K562 (cell line): ENCODE measurements at regions of chr7 and their contacts with region 1.

Region 1: DNA sequence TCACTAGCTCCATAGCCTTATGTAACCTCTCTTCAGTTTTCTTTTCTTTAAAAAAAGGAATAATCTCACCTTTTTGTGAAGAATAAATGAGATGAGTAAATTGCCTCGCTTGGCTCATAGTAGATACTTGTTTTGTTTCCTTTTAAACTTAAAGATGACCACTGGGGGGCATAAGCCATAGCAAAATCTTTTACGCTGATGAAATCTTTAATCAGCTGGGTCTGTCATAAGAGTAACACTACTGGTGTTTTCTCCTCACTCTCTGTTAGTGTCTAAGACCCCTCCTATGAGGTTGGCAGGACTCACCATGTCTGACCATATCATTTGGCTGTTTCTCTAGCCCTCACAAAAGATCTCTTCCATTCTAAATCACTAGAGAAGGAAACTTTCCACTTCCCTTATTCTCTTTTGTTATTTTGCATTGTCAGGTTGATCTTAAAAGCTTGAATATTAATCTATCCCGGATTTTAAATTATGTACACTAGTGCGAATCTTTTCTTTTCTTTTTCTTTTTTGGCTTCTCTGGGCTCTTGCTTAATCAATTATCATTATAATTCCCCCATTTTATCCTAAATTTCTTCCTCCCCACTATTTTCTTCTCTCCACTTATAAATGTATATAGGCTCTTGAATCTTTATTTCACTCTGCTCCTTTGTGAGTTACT is 12.5 kb downstream of the STAG3 start:
- DNase-seq: peak; percentile 48 to 76 (median 52)
- ATAC-seq: peak; percentile 90
- H3K4me3 ChIP-seq: no peak overlapping the region
- H3K27ac ChIP-seq: no peak overlapping the region
- H3K4me1 ChIP-seq: peaks cover 0 to 11% of the 10 kb centered on the region in 2 experiments; a peak in 3 of 5 replicates
- H3K27me3 ChIP-seq: no peaks in the 10 kb centered on the region
- CTCF ChIP-seq: peak; percentile 65 to 80 (median 73); a peak in 5 of 6 replicates
- EP300 ChIP-seq: peak; percentile 57; the same call in 1 of the 2 replicates
- POLR2A ChIP-seq: no peak
- RAD21 ChIP-seq: peak; percentile 78 to 83

Region 2: GRCh38 chr7:100148559-100149350 is 41.4 kb before region 1 on chr7 and contains the start of gene LAMTOR4:
- CTCF ChIA-PET with region 1: no interaction called
- POLR2A ChIA-PET with region 1: no interaction called
- in situ Hi-C with region 1: no loop called
- intact Hi-C with region 1: loop called (anchors 1 kb)
- DNase-seq: peak; percentile 99 to 100 (median 100)
- ATAC-seq: peak; percentile 99
- H3K4me3 ChIP-seq: peak within 1 kb of the TSS; percentile 87
- H3K27ac ChIP-seq: peak within 1 kb of the TSS; percentile 68
- H3K4me1 ChIP-seq: peaks cover 14 to 38% of the 10 kb centered on the region in 2 experiments; a peak in 4 of 5 replicates
- H3K27me3 ChIP-seq: no peaks in the 10 kb centered on the region
- CTCF ChIP-seq: peak in 1 of 3 experiments; percentile 6; a peak in 1 of 6 replicates
- EP300 ChIP-seq: no peak; the same call in 1 of the 2 replicates
- POLR2A ChIP-seq: peak; percentile 92
- RAD21 ChIP-seq: no peak
- polyA plus RNA-seq, gene LAMTOR4: 206 to 314 TPM

Region 3: DNA sequence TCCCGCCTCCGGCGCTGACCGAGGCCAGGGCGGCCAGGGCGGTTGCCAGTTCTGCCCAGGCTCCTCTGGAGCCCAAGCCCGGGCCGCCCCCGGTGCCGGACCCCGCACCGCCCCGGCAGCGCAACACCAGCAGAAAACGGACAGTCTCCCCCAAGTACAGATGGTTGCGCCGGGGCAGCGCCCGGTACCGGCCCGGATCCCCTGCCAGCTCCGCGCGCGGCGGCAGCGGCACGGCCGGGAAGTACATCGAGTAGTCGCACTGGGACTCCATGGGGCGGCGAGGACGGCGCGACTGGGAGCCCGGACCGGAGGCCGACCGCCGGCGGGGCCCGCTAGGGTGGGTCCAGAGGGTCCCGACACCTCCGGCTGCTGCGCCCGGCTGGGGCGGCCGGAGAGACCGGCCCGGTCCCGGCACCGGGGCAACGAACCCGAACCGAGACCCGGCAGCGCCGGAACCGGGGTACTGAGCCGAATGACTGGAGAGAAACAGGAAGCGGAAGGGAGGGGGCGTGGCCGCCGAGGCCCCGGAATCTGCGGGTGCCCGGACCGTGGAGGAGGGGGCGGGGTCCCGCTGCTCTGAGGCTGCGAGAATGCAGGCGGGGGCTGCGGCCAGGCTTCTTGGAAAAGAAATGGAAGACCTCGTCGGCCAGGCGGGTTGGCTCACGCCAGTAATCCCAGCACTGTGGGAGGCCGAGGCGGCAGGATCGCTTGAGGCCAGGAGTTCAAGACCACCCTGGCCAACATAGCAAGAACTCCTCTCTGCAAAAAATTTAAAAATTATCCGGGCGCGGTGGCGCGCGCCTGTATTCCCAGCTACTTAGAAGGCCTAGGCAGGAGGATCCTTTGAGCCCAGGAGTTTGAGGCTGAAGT is 31.7 kb before region 1 on chr7 and contains the start of gene TRAPPC14:
- CTCF ChIA-PET with region 1: no interaction called
- POLR2A ChIA-PET with region 1: no interaction called
- in situ Hi-C with region 1: no loop called
- intact Hi-C with region 1: loop called (anchors 1 kb)
- DNase-seq: peak; percentile 97 to 100 (median 98)
- ATAC-seq: peak; percentile 87
- H3K4me3 ChIP-seq: peak within 1 kb of the TSS; percentile 99
- H3K27ac ChIP-seq: peak within 1 kb of the TSS; percentile 91
- H3K4me1 ChIP-seq: peaks cover 35 to 74% of the 10 kb centered on the region in 2 experiments
- H3K27me3 ChIP-seq: no peaks in the 10 kb centered on the region
- CTCF ChIP-seq: no peak
- EP300 ChIP-seq: peak; percentile 55; the same call in 1 of the 2 replicates
- POLR2A ChIP-seq: peak; percentile 90
- RAD21 ChIP-seq: peak in 1 of 2 experiments; percentile 8; a peak in 1 of 4 replicates
- polyA plus RNA-seq, gene TRAPPC14: 0.42 to 0.55 TPM

Region 4: GRCh38 chr7:100167921-100168323 is 22.3 kb before region 1 on chr7:
- CTCF ChIA-PET with region 1: no interaction called
- POLR2A ChIA-PET with region 1: interaction called, 15 read pairs
- in situ Hi-C with region 1: no loop called
- intact Hi-C with region 1: no loop called
- DNase-seq: peak; percentile 62 to 87 (median 72)
- ATAC-seq: peak; percentile 83
- H3K4me3 ChIP-seq: peak overlapping the region; percentile 32
- H3K27ac ChIP-seq: peak overlapping the region; percentile 37; the same call in 2 of the 3 replicates
- H3K4me1 ChIP-seq: peaks cover 45 to 53% of the 10 kb centered on the region in 2 experiments
- H3K27me3 ChIP-seq: no peaks in the 10 kb centered on the region
- CTCF ChIP-seq: peak in 1 of 3 experiments; percentile 6; a peak in 1 of 6 replicates
- EP300 ChIP-seq: peak; percentile 73
- POLR2A ChIP-seq: no peak
- RAD21 ChIP-seq: peak in 1 of 2 experiments; percentile 19; a peak in 1 of 4 replicates

Region 5: DNA sequence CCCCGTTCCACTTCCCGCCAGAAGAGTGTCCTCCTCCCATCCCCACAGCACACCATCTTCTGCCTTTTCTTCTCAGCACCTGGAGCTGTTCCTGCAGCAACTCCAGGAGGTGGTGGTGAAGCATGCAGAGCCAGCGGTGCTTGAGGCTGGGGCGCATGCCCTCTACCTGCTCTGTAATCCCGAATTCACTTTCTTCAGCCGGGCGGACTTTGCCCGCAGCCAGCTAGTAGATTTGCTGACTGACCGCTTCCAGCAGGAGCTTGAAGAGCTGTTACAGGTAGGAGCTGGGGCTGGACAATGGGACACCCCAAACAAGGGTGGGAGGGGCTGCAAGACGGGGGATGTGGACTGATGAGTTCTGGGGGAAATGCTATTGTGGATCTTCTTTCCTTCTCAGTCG is 10.5 kb after region 1 on chr7:
- CTCF ChIA-PET with region 1: no interaction called
- POLR2A ChIA-PET with region 1: interaction called, 12 read pairs
- in situ Hi-C with region 1: no loop called
- intact Hi-C with region 1: no loop called
- DNase-seq: no peak
- ATAC-seq: no peak; the same call in 2 of the 3 replicates
- H3K4me3 ChIP-seq: no peak overlapping the region
- H3K27ac ChIP-seq: no peak overlapping the region
- H3K4me1 ChIP-seq: peaks cover 17 to 24% of the 10 kb centered on the region in 2 experiments; a peak in 4 of 5 replicates
- H3K27me3 ChIP-seq: no peaks in the 10 kb centered on the region
- CTCF ChIP-seq: no peak
- EP300 ChIP-seq: no peak
- POLR2A ChIP-seq: no peak
- RAD21 ChIP-seq: no peak

Region 6: GRCh38 chr7:100215895-100216294 is 25.7 kb after region 1 on chr7:
- CTCF ChIA-PET with region 1: interaction called, 4 read pairs
- POLR2A ChIA-PET with region 1: interaction called, 3 read pairs
- in situ Hi-C with region 1: no loop called
- intact Hi-C with region 1: loop called (anchors 1 kb)
- DNase-seq: no peak
- ATAC-seq: no peak
- H3K4me3 ChIP-seq: no peak overlapping the region
- H3K27ac ChIP-seq: no peak overlapping the region
- H3K4me1 ChIP-seq: peaks cover 4 to 15% of the 10 kb centered on the region in 2 experiments; a peak in 4 of 5 replicates
- H3K27me3 ChIP-seq: no peaks in the 10 kb centered on the region
- CTCF ChIP-seq: no peak
- EP300 ChIP-seq: no peak
- POLR2A ChIP-seq: no peak
- RAD21 ChIP-seq: no peak